ENCODE measurements at regions of chr9 and their contacts with region 1.

Region 1: GRCh38 chr9:125241000-125241862 is at the start of gene HSPA5:
- DNase-seq: peak; percentile 99
- H3K4me3 ChIP-seq: peak within 1 kb of the TSS; percentile 89 to 100 (median 96)
- H3K27ac ChIP-seq: peak within 1 kb of the TSS; percentile 87
- H3K4me1 ChIP-seq: peaks cover 35% of the 10 kb centered on the region
- H3K27me3 ChIP-seq: no peaks in the 10 kb centered on the region
- CTCF ChIP-seq: peak in 1 of 2 donors; percentile 20
- total RNA-seq, gene HSPA5: 126 to 485 TPM

Region 2: GRCh38 chr9:125255781-125256391 is 14.7 kb after region 1 on chr9:
- CTCF ChIA-PET with region 1: no interaction called
- dilution Hi-C with region 1: no loop called
- in situ Hi-C with region 1: no loop called
- intact Hi-C with region 1: loop called (anchors 1 kb)
- DNase-seq: no peak
- H3K4me3 ChIP-seq: no peak overlapping the region
- H3K27ac ChIP-seq: no peak overlapping the region
- H3K4me1 ChIP-seq: no peaks in the 10 kb centered on the region
- H3K27me3 ChIP-seq: no peaks in the 10 kb centered on the region
- CTCF ChIP-seq: peak; percentile 24 to 31

Region 3: GRCh38 chr9:125293134-125293533 is 51.9 kb after region 1 on chr9:
- CTCF ChIA-PET with region 1: no interaction called
- dilution Hi-C with region 1: no loop called
- in situ Hi-C with region 1: no loop called
- intact Hi-C with region 1: no loop called
- DNase-seq: peak; percentile 57
- H3K4me3 ChIP-seq: no peak overlapping the region
- H3K27ac ChIP-seq: no peak overlapping the region
- H3K4me1 ChIP-seq: peaks cover 6% of the 10 kb centered on the region
- H3K27me3 ChIP-seq: no peaks in the 10 kb centered on the region
- CTCF ChIP-seq: no peak

Region 4: DNA sequence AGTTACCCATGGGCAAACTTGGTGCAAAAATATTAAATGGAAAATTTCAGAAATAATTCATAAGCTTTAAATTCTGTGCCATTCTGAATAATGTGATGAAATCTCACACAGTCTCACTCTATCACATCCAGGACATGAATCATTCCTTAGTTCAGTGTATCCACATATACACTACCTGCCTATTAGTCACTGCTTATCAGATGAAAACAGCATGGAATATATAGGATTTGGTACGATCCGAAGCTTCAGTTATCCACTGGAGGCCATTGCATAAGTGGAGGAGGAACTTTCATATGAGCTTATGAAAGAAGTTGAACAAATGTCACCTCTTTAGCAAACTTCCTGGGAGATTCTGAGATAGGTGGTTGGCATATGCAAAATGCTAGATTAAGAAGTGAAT is 84.6 kb after region 1 on chr9:
- CTCF ChIA-PET with region 1: no interaction called
- dilution Hi-C with region 1: no loop called
- in situ Hi-C with region 1: no loop called
- intact Hi-C with region 1: loop called (anchors 5 kb)
- DNase-seq: peak; percentile 70
- H3K4me3 ChIP-seq: no peak overlapping the region
- H3K27ac ChIP-seq: no peak overlapping the region
- H3K4me1 ChIP-seq: peaks cover 22% of the 10 kb centered on the region
- H3K27me3 ChIP-seq: no peaks in the 10 kb centered on the region
- CTCF ChIP-seq: no peak

Region 5: GRCh38 chr9:125374443-125375309 is 133.4 kb after region 1 on chr9:
- CTCF ChIA-PET with region 1: no interaction called
- dilution Hi-C with region 1: no loop called
- in situ Hi-C with region 1: no loop called
- intact Hi-C with region 1: no loop called
- DNase-seq: peak; percentile 37
- H3K4me3 ChIP-seq: peak overlapping the region; percentile 18 to 50 (median 35)
- H3K27ac ChIP-seq: no peak overlapping the region
- H3K4me1 ChIP-seq: no peaks in the 10 kb centered on the region
- H3K27me3 ChIP-seq: no peaks in the 10 kb centered on the region
- CTCF ChIP-seq: peak; percentile 59 to 86

Measured in mammary epithelial cell (primary cell).